ENCODE measurements at regions of chr5 and their contacts with region 1.

Region 1: GRCh38 chr5:115625579-115626444 is at the start of gene TMED7:
- DNase-seq: peak; percentile 99
- H3K4me3 Mint-ChIP-seq: no peak within 1 kb of the TSS
- H3K27ac Mint-ChIP-seq: no peak within 1 kb of the TSS
- H3K4me1 Mint-ChIP-seq: peaks cover 30% of the 10 kb centered on the region
- H3K27me3 Mint-ChIP-seq: peaks cover 3% of the 10 kb centered on the region
- total RNA-seq, gene TMED7: 52.7 to 55.6 TPM

Region 2: DNA sequence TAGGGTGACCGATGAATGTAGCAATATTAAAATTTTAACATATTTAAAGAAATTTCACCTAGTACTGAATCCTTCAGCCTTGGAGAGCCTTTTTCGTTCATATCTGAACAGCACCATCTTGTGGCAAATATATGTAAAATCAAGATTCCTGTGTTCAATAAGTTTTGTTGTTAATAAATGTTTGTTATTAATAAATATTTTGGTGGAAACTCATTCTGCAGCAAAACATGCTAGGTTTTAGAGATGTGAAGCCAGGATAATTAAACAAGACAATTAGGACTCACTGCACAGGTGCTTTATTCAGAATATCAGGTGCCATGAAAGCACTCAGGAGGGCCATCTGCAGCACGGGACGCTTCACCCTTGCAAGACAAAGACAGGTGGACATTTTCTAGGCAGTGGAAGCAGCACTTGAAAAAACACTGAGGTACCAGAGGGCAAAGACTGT is 39.2 kb before region 1 on chr5:
- CTCF ChIA-PET with region 1: no interaction called
- POLR2A ChIA-PET with region 1: no interaction called
- DNase-seq: no peak
- H3K4me3 Mint-ChIP-seq: no peak overlapping the region
- H3K27ac Mint-ChIP-seq: no peak overlapping the region
- H3K4me1 Mint-ChIP-seq: no peaks in the 10 kb centered on the region
- H3K27me3 Mint-ChIP-seq: no peaks in the 10 kb centered on the region

Region 3: DNA sequence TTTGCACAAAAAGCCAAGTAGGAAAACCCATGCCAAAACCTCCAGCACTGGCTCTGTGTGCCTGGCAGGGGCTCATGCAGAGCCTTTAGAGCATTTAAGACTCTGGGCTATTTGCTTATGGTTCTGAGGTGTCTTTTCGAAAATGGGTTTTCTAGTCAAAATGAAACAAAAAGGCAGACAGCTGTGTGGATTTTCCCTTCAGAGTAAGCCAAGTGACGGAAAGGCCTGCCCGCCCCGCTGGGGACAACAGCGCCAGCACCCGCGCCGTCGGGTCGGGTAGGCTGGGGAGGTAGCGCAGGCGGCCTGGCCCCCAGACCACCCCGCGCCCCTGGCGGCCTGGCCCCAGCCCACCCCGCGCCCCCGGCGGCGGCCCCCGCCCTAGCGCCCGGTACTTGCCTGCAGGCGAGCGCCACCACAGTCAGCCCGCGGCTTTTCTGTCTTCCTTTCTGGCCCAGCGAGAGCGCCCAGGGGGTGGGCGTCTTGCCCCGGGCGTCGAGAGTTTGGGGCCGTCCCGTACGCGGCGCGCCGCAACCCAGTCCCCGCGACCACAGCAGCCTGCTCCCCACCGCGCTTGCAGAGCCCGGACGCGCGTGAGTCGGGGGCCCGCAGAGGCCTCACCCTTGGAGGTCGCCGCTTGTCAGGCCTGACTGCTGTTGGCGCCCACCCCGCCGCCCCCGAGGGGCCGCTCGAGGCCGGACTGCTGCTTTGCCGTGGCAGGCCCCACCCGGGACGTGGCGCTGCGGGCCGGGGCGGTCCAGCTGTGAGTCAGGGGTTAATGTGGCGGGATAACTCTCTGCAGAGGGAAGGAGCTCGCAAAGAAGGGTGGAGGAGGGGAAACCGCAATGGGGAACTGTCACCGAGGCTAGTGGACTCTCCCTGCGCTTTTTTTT is 23.9 kb before region 1 on chr5 and contains the start of gene TICAM2:
- CTCF ChIA-PET with region 1: interaction called, 6 read pairs
- POLR2A ChIA-PET with region 1: interaction called, 26 read pairs
- DNase-seq: peak; percentile 62
- H3K4me3 Mint-ChIP-seq: peak within 1 kb of the TSS; percentile 67
- H3K27ac Mint-ChIP-seq: peak within 1 kb of the TSS; percentile 11
- H3K4me1 Mint-ChIP-seq: peaks cover 26% of the 10 kb centered on the region
- H3K27me3 Mint-ChIP-seq: no peaks in the 10 kb centered on the region
- total RNA-seq, gene TICAM2: 1.8 to 2.5 TPM

Region 4: GRCh38 chr5:115641948-115642347 is 16.1 kb after region 1 on chr5:
- CTCF ChIA-PET with region 1: no interaction called
- POLR2A ChIA-PET with region 1: no interaction called
- DNase-seq: no peak
- H3K4me3 Mint-ChIP-seq: no peak overlapping the region
- H3K27ac Mint-ChIP-seq: no peak overlapping the region
- H3K4me1 Mint-ChIP-seq: peaks cover 16% of the 10 kb centered on the region
- H3K27me3 Mint-ChIP-seq: peaks cover 54% of the 10 kb centered on the region

Region 5: DNA sequence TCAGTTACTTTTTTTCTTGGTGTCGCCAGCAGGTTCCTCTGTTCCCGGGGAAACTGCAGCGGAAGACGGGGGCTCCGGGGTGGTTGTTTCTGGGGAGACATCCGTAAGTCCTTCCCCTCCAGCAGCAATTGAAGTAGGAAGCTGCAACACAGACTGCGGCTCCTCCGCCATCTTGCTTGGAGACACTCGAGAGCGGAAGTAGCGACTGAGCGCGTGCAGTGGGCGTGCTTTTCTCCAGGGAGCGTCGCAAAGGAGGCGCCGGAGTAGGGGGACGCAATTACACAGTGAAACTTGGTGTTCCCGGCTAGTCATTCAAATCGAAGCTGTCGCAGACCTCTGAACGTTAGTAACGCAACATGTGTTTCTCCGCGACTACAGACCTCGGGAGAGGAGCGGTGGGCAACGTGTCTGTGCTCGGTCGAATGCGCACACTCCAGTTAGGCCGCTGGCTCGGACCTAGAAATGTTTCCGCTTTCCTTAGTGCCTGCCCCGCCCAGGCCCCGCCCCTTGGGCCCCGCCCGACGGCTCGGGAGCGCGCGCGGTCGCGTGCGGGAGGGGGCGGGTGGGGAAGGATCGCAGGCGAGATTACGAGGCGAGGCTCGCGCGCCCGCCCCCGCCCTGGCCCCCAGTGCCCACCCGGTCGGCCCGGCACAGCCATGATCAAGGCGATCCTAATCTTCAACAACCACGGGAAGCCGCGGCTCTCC is 215.7 kb after region 1 on chr5 and contains the starts of genes AP3S1 and ATG12:
- CTCF ChIA-PET with region 1: interaction called, 8 read pairs
- POLR2A ChIA-PET with region 1: interaction called, 48 read pairs
- DNase-seq: peak; percentile 91
- H3K4me3 Mint-ChIP-seq: peak within 1 kb of the TSS; percentile 88
- H3K27ac Mint-ChIP-seq: peak within 1 kb of the TSS; percentile 93
- H3K4me1 Mint-ChIP-seq: peaks cover 54% of the 10 kb centered on the region
- H3K27me3 Mint-ChIP-seq: no peaks in the 10 kb centered on the region
- total RNA-seq, gene AP3S1: 73.5 to 87.0 TPM
- total RNA-seq, gene ATG12: 45.5 to 49.0 TPM

Measured in activated CD4-positive, alpha-beta memory T cell treated with anti-CD3 and anti-CD28 coated beads, Interleukin-2, amount 10 ng/mL, durations not matched to agents 7 days and 5 days (primary cell).